Activated B cell treated with CpG ODN at 0.5 μM for 24 hours (primary cell): ENCODE measurements at regions of chr1 and their contacts with region 1.

Region 1: GRCh38 chr1:45686317-45687013 is at the start of gene GPBP1L1:
- DNase-seq: peak; percentile 98
- ATAC-seq: peak; percentile 73
- H3K4me3 Mint-ChIP-seq: peak within 1 kb of the TSS; percentile 99
- H3K27ac Mint-ChIP-seq: peak within 1 kb of the TSS; percentile 100
- H3K4me1 Mint-ChIP-seq: peaks cover 53% of the 10 kb centered on the region
- H3K27me3 Mint-ChIP-seq: no peaks in the 10 kb centered on the region
- CTCF ChIP-seq: no peak
- total RNA-seq, gene GPBP1L1: 133 and 138 TPM in 2 replicates

Region 2: GRCh38 chr1:44029906-44030604 is 1656.4 kb before region 1 on chr1:
- CTCF ChIA-PET with region 1: no interaction called
- POLR2A ChIA-PET with region 1: no interaction called
- intact Hi-C with region 1: loop called (anchors 5 kb)
- DNase-seq: peak; percentile 93
- ATAC-seq: peak; percentile 76
- H3K4me3 Mint-ChIP-seq: peak overlapping the region; percentile 95
- H3K27ac Mint-ChIP-seq: peak overlapping the region; percentile 97
- H3K4me1 Mint-ChIP-seq: peaks cover 32% of the 10 kb centered on the region
- H3K27me3 Mint-ChIP-seq: no peaks in the 10 kb centered on the region
- CTCF ChIP-seq: no peak

Region 3: GRCh38 chr1:45339789-45340570 is 346.5 kb before region 1 on chr1 and contains the starts of genes MUTYH and TOE1:
- CTCF ChIA-PET with region 1: no interaction called
- POLR2A ChIA-PET with region 1: interaction called, 8 read pairs
- intact Hi-C with region 1: loop called (anchors 2 kb)
- DNase-seq: peak; percentile 85
- ATAC-seq: peak; percentile 86
- H3K4me3 Mint-ChIP-seq: peak within 1 kb of the TSS; percentile 100
- H3K27ac Mint-ChIP-seq: peak within 1 kb of the TSS; percentile 99
- H3K4me1 Mint-ChIP-seq: peaks cover 39% of the 10 kb centered on the region
- H3K27me3 Mint-ChIP-seq: no peaks in the 10 kb centered on the region
- CTCF ChIP-seq: no peak
- total RNA-seq, gene MUTYH: 61.0 and 63.0 TPM in 2 replicates
- total RNA-seq, gene TOE1: 24.6 and 25.3 TPM in 2 replicates

Region 4: GRCh38 chr1:45458894-45459293 is 227.6 kb before region 1 on chr1:
- CTCF ChIA-PET with region 1: no interaction called
- POLR2A ChIA-PET with region 1: no interaction called
- intact Hi-C with region 1: no loop called
- DNase-seq: no peak
- ATAC-seq: no peak
- H3K4me3 Mint-ChIP-seq: no peak overlapping the region
- H3K27ac Mint-ChIP-seq: no peak overlapping the region
- H3K4me1 Mint-ChIP-seq: peaks cover 21% of the 10 kb centered on the region
- H3K27me3 Mint-ChIP-seq: no peaks in the 10 kb centered on the region
- CTCF ChIP-seq: no peak

Region 5: GRCh38 chr1:45583264-45583665 is 103.2 kb before region 1 on chr1:
- CTCF ChIA-PET with region 1: no interaction called
- POLR2A ChIA-PET with region 1: interaction called, 31 read pairs
- intact Hi-C with region 1: loop called (anchors 1 kb)
- DNase-seq: peak; percentile 84
- ATAC-seq: peak; percentile 79
- H3K4me3 Mint-ChIP-seq: peak overlapping the region; percentile 98
- H3K27ac Mint-ChIP-seq: peak overlapping the region; percentile 96
- H3K4me1 Mint-ChIP-seq: peaks cover 46% of the 10 kb centered on the region
- H3K27me3 Mint-ChIP-seq: no peaks in the 10 kb centered on the region
- CTCF ChIP-seq: no peak

Region 6: GRCh38 chr1:45635211-45635610 is 51.3 kb before region 1 on chr1:
- CTCF ChIA-PET with region 1: no interaction called
- POLR2A ChIA-PET with region 1: no interaction called
- intact Hi-C with region 1: no loop called
- DNase-seq: no peak
- ATAC-seq: no peak
- H3K4me3 Mint-ChIP-seq: no peak overlapping the region
- H3K27ac Mint-ChIP-seq: no peak overlapping the region
- H3K4me1 Mint-ChIP-seq: no peaks in the 10 kb centered on the region
- H3K27me3 Mint-ChIP-seq: no peaks in the 10 kb centered on the region
- CTCF ChIP-seq: no peak

Region 7: DNA sequence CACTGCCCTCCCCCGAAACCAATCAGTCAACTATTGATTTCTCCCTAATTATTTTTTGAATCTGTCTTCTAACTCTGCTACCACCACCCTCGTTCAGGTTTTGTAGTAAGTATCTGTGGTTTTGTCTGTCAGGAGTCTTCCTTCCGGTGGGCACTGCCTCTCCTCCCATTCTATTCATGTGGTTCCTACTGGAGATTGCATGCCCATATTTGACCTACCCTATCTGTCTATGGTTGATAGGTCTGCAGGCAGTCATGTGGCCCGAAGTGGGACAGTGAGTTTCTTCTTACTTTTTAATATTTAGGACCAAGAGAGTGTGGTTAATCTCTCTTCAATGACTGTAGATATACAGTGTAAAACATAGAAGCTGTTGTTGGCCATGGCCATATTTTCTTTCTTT is 99.1 kb after region 1 on chr1:
- CTCF ChIA-PET with region 1: no interaction called
- POLR2A ChIA-PET with region 1: no interaction called
- intact Hi-C with region 1: no loop called
- DNase-seq: no peak
- ATAC-seq: no peak
- H3K4me3 Mint-ChIP-seq: no peak overlapping the region
- H3K27ac Mint-ChIP-seq: no peak overlapping the region
- H3K4me1 Mint-ChIP-seq: peaks cover 13% of the 10 kb centered on the region
- H3K27me3 Mint-ChIP-seq: no peaks in the 10 kb centered on the region
- CTCF ChIP-seq: no peak

Region 8: DNA sequence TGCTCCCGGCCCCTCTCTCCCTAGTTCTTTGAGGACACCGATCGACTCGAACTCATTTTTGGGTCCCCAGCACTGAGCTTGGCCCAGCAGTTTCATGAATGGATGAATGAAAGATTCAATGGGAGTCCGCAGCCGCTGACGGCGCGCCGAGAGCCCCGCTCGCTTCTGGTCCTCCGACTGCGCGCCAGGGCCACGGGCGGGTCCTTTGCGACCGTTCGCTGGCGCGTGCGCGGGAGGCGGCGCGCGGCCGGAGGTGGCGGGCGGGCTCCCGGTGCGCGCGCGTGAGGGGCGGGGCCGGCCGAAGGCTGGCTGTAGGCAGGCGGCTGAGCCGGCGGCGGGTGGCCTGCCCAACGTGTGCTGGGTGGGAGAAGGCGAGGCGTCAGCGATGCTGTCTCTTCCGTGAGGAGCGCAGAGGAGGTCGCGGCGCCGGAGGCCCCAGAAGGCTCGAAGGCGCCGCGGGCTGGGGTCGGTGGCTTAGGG is 116.9 kb after region 1 on chr1 and contains the start of gene MAST2:
- CTCF ChIA-PET with region 1: interaction called, 3 read pairs
- POLR2A ChIA-PET with region 1: no interaction called
- intact Hi-C with region 1: loop called (anchors 1 kb)
- DNase-seq: peak; percentile 91
- ATAC-seq: peak; percentile 96
- H3K4me3 Mint-ChIP-seq: peak within 1 kb of the TSS; percentile 92
- H3K27ac Mint-ChIP-seq: peak within 1 kb of the TSS; percentile 69
- H3K4me1 Mint-ChIP-seq: peaks cover 18% of the 10 kb centered on the region
- H3K27me3 Mint-ChIP-seq: no peaks in the 10 kb centered on the region
- CTCF ChIP-seq: no peak
- total RNA-seq, gene MAST2: 16.2 and 20.9 TPM in 2 replicates

Region 9: DNA sequence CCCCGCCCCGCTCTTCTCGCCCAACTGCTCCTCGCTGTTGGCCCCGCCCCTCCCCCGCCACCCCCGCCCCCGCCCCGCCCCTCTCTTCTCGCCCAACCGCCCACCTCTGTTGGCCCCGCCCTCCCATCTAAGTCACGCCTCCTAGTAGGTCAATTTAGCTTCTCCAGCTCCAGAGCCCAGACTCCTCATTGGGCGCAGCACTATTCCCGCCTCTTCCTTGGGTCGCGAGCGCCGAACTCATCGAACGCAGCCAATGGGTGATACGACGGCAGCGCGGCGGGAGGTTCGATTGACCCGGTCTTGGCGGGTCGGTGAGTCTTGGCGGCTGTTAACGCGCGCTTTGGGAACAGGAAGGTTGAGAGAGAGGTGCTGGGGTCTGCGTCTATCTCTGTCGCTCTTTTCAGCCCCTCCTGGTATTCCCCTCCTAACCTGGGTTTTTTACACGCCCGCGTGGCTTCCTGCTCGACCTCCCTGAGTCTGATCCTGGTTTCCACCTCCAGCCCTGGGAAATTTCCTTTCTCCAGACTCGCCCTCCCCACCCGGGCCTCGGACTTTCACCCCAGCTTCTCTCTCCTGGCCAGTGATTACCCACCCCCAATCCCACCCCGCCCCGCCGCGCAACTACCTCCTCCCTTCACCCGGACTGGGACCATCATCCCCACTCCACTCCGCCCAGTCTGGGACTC is 561.1 kb after region 1 on chr1 and contains the start of gene RAD54L:
- CTCF ChIA-PET with region 1: no interaction called
- POLR2A ChIA-PET with region 1: no interaction called
- intact Hi-C with region 1: loop called (anchors 1 kb)
- DNase-seq: peak; percentile 86
- ATAC-seq: peak; percentile 96
- H3K4me3 Mint-ChIP-seq: peak within 1 kb of the TSS; percentile 95
- H3K27ac Mint-ChIP-seq: peak within 1 kb of the TSS; percentile 86
- H3K4me1 Mint-ChIP-seq: peaks cover 19% of the 10 kb centered on the region
- H3K27me3 Mint-ChIP-seq: no peaks in the 10 kb centered on the region
- CTCF ChIP-seq: no peak
- total RNA-seq, gene RAD54L: 2.9 and 3.7 TPM in 2 replicates